ENCODE measurements at regions of chr11 and their contacts with region 1.

Region 1: GRCh38 chr11:123246749-123247495 is 51.9 kb upstream of the CLMP start:
- DNase-seq: peak; percentile 85
- H3K4me3 ChIP-seq: no peak overlapping the region
- H3K27ac ChIP-seq: no peak overlapping the region
- H3K4me1 ChIP-seq: peaks cover 0 to 11% (median 6%) of the 10 kb centered on the region in 4 donors
- H3K27me3 ChIP-seq: no peaks in the 10 kb centered on the region
- CTCF ChIP-seq: peak; percentile 90 to 98 (median 96)
- EP300 ChIP-seq: no peak
- POLR2A ChIP-seq: no peak

Region 2: GRCh38 chr11:123069908-123070821 is 176.8 kb before region 1 on chr11:
- in situ Hi-C with region 1: no loop called
- intact Hi-C with region 1: no loop called
- DNase-seq: no peak
- H3K4me3 ChIP-seq: peak overlapping the region in 1 of 4 donors; percentile 25
- H3K27ac ChIP-seq: peak overlapping the region; percentile 68 to 76 (median 74)
- H3K4me1 ChIP-seq: peaks cover 7 to 29% (median 13%) of the 10 kb centered on the region in 4 donors
- H3K27me3 ChIP-seq: no peaks in the 10 kb centered on the region
- CTCF ChIP-seq: no peak
- EP300 ChIP-seq: no peak
- POLR2A ChIP-seq: no peak

Region 3: GRCh38 chr11:123110356-123110755 is 136.6 kb before region 1 on chr11:
- in situ Hi-C with region 1: loop called (anchors 5 to 10 kb)
- intact Hi-C with region 1: loop called (anchors 2 kb)
- DNase-seq: no peak
- H3K4me3 ChIP-seq: no peak overlapping the region
- H3K27ac ChIP-seq: no peak overlapping the region
- H3K4me1 ChIP-seq: peaks cover 0 to 6% (median 2%) of the 10 kb centered on the region in 4 donors
- H3K27me3 ChIP-seq: no peaks in the 10 kb centered on the region
- CTCF ChIP-seq: no peak
- EP300 ChIP-seq: no peak
- POLR2A ChIP-seq: no peak

Region 4: DNA sequence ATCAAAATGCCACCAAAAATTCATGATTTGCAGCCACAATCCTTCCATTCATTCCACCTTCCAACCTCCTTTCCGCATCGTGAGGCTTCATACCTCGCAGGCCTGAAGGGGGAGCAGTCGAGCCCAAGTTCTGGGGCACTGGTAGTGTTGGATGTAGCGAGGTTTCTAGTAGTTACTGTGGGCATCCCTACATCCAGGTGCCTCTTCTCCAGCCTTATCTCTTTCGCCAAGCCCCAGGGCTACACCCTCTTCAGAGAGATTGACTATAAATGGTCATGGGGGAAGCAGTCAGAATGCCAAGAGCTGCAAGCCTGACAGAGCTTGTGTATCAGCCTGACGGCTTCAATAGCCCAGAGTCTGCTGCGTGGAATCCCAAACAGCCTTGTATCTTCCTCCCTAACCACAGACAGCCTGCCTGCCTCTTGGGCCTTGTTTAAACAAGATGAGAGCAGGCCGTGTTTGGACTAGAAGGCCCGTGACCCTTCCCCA is 80.8 kb before region 1 on chr11:
- in situ Hi-C with region 1: no loop called
- intact Hi-C with region 1: loop called (anchors 2 kb)
- DNase-seq: peak; percentile 58
- H3K4me3 ChIP-seq: no peak overlapping the region
- H3K27ac ChIP-seq: peak overlapping the region; percentile 54 to 82 (median 64)
- H3K4me1 ChIP-seq: peaks cover 0 to 10% (median 0%) of the 10 kb centered on the region in 4 donors
- H3K27me3 ChIP-seq: no peaks in the 10 kb centered on the region
- CTCF ChIP-seq: peak; percentile 42 to 56 (median 54)
- EP300 ChIP-seq: no peak
- POLR2A ChIP-seq: no peak

Region 5: DNA sequence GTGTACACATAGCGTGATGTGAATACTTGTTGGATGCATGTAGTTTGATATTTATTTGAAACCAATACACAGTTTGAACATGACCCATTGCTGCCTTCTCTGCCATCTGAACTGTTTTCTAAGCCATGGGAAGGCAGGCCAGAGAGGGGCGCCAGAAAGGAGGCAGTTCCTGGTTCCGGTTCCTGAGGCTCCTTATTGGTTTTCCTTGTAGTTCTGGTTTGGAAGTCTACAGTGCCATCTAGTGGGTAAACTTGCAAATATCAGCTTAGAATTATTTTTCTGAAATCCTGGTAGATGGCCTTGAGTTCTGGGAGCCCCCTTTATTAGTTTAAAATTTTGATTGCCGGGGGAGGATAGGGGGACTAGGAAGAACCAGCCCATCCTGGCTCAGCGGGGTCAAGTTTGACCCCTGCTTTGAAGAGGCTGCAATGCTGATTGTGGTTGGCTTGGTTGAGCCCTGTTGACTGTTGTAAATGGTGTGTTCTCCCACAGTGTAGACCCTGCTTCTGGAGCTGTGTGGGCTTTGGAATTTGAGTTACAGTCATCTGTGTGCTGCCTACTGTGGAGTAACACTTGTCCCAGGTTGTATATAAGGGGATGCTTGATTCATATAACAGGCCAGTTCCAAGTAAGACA is 231.5 kb after region 1 on chr11:
- in situ Hi-C with region 1: no loop called
- intact Hi-C with region 1: no loop called
- DNase-seq: peak; percentile 42
- H3K4me3 ChIP-seq: no peak overlapping the region
- H3K27ac ChIP-seq: no peak overlapping the region
- H3K4me1 ChIP-seq: peaks cover 0 to 5% (median 0%) of the 10 kb centered on the region in 4 donors
- H3K27me3 ChIP-seq: no peaks in the 10 kb centered on the region
- CTCF ChIP-seq: peak; percentile 70 to 79 (median 71)
- EP300 ChIP-seq: no peak
- POLR2A ChIP-seq: no peak

Measured in transverse colon (tissue), 4 donors.